ENCODE measurements at regions of chr6 and their contacts with region 1.

Region 1: DNA sequence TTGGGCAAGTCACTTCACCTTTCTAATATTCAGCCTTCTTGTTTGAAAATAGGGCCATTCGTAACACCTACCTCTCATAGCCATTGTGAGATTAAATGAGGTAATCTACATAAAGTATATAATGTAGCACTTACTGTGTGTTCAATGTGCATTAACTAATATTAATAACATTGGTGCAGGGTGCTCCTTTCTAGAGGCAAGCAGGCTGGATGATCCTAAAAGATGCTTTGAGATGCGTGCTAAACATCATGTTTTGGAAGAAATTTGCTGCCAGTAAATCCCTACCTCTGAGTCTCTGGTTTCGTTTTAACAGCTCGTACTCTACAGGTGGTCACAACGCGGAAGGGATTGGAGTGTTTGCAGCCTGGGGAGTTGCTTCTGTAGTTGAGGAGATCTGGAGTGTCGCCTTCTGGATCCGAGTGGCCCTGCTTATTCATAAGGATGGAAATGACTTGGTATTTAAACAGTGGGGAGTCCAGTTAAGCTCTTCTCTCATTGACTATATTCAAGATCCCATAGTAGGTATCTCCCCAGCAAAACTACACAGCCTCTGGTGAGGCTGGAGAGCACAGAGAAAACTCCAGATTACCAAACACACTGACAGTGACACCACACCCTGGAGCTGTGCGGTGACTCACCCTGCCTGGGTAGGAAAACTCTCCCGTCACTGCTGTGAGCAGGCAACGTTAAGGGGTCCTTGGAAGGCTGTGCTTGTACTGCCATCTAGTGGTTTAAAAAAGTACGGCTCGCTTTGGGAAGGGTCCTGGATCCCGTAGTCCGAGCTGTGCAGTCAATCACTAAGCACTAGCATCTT is 107.9 kb downstream of the MAP3K7 start:
- DNase-seq: peak; percentile 46
- CTCF ChIP-seq: peak; percentile 80

Region 2: DNA sequence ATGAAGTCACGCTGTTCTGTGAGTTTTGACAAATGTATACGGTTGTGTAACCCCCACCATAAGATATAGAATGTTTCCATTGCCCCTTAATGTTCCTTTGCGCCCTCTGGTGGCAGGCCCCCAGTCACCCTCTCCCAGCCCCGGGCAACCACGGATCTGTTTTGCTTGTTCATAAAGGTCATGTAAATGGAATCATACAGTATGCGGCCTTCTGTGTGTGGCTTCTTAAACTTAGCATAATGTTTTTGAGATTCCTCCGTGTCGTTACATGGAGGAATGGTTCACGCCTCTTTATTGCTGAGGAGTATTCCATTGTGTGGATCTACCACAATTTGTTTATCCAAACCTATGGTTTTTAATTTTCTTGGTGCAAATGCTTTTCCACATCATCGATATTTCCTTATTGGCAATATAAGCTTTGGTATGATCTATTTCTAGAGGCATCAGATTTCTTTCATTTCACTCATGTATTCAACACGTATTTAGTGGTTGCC is 868.8 kb before region 1 on chr6:
- in situ Hi-C with region 1: no loop called
- DNase-seq: peak; percentile 72
- CTCF ChIP-seq: peak; percentile 87

Region 3: GRCh38 chr6:89940225-89941027 is 538.6 kb before region 1 on chr6:
- in situ Hi-C with region 1: loop called (anchors 10 kb)
- DNase-seq: peak; percentile 82
- CTCF ChIP-seq: peak; percentile 84

Region 4: GRCh38 chr6:90044833-90045381 is 434.1 kb before region 1 on chr6:
- in situ Hi-C with region 1: no loop called
- DNase-seq: no peak
- CTCF ChIP-seq: no peak